Endothelial cell of umbilical vein (primary cell): ENCODE measurements at regions of chr3 and their contacts with region 1.

Region 1: DNA sequence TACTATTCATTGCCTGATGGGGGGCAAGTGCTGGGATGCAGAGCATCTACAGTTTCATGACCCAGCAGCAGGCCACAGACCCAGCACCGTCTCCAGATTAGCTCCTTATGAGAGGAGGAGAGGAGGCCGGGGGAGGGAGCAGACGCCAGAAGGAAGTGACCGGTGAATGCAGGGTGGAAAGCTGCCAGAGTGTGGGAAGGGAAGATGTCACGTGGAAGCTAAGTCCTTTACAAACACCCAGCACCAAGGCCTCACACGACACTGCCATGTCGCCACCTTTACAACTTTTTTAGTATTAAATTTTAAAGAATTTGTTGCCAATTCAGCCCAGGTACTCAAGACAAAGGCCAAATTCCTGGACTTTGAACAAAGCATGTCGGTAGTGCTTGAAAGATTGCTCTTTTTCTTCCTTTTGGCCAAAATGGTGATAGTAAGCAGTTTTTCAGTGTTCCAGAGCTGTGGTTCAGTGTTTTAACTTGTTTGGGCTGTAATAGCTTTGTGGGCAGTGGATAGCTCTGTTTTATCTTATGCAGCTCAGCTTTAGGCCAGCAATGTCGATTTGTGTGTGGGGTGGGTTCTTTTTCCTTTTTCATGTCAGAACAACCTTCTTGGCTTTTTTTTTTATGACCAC is 58.2 kb downstream of the ZBTB38 start:
- DNase-seq: peak; percentile 89
- H3K4me3 ChIP-seq: no peak overlapping the region
- H3K27ac ChIP-seq: peak overlapping the region; percentile 44
- H3K4me1 ChIP-seq: peaks cover 16% of the 10 kb centered on the region
- H3K27me3 ChIP-seq: no peaks in the 10 kb centered on the region
- CTCF ChIP-seq: no peak
- POLR2A ChIP-seq: no peak

Region 2: DNA sequence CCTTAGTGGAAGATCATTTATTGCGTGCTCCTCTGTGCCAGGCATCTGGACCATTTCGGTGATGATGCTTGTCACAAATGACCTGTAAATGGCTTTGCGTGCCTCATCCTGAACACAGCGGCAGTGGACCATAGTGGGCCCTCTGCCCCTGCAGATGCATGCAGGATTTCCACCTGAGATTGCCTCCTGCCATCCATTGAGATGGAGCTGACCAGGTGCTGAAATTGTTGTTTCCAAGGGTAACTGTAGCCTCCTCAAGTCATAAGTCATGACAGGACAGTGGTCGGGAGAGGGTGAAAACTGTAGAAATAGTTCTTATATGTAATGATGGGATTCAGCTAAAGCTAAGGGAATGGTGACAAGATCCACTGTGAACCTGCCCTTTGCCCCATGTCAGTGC is 1456.0 kb before region 1 on chr3:
- CTCF ChIA-PET with region 1: no interaction called
- POLR2A ChIA-PET with region 1: no interaction called
- dilution Hi-C with region 1: no loop called
- intact Hi-C with region 1: no loop called
- DNase-seq: no peak
- H3K4me3 ChIP-seq: no peak overlapping the region
- H3K27ac ChIP-seq: no peak overlapping the region
- H3K4me1 ChIP-seq: no peaks in the 10 kb centered on the region
- H3K27me3 ChIP-seq: no peaks in the 10 kb centered on the region
- CTCF ChIP-seq: no peak
- POLR2A ChIP-seq: no peak

Region 3: DNA sequence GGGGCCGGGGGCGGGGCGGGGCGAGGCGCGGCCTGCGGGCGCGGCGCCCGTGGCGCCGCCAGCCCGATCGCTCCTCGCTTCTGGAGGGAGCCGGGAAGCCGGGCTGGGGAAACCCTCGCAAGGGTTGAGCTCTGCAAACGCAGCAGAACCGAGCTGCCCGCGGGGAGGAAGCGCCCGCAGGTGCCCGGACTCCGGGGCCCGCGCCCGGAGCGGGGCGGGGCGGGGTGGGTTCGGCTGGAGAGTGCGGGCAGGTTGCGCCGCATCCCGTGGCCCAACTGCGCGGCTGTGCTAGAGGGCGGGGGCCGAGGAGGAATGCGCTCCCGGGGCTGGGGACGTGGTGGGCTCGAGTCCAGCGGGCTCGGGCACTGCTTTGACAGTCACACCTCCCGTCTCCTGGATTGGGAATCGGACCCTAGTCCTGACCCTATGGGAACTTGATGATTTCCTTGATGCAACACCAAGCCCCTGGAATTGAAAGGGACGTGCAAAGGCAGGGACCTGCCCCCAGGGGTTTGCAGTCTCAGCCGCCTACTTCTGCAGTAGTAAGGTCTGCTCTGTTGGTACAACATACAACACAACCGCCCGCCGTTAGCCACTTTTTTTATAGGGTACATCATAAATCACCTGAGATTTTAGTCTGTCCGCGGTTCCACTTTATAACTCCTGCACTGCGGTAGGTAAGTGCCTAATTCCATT is 23.9 kb before region 1 on chr3:
- CTCF ChIA-PET with region 1: interaction called, 13 read pairs
- POLR2A ChIA-PET with region 1: interaction called, 3 read pairs
- dilution Hi-C with region 1: no loop called
- intact Hi-C with region 1: no loop called
- DNase-seq: peak; percentile 76
- H3K4me3 ChIP-seq: peak overlapping the region; percentile 8 to 86 (median 65)
- H3K27ac ChIP-seq: peak overlapping the region; percentile 97
- H3K4me1 ChIP-seq: peaks cover 47% of the 10 kb centered on the region
- H3K27me3 ChIP-seq: no peaks in the 10 kb centered on the region
- CTCF ChIP-seq: peak in 1 of 2 donors; percentile 2
- POLR2A ChIP-seq: peak; percentile 60

Region 4: GRCh38 chr3:141412087-141412935 is 14.2 kb before region 1 on chr3:
- CTCF ChIA-PET with region 1: interaction called, 25 read pairs
- POLR2A ChIA-PET with region 1: no interaction called
- dilution Hi-C with region 1: no loop called
- intact Hi-C with region 1: loop called (anchors 1 kb)
- DNase-seq: peak; percentile 88
- H3K4me3 ChIP-seq: peak overlapping the region in 1 of 3 experiments; percentile 27
- H3K27ac ChIP-seq: peak overlapping the region; percentile 90
- H3K4me1 ChIP-seq: peaks cover 68% of the 10 kb centered on the region
- H3K27me3 ChIP-seq: no peaks in the 10 kb centered on the region
- CTCF ChIP-seq: no peak
- POLR2A ChIP-seq: peak; percentile 41